SK-N-SH (cell line): ENCODE measurements at regions of chr12 and their contacts with region 1.

Region 1: DNA sequence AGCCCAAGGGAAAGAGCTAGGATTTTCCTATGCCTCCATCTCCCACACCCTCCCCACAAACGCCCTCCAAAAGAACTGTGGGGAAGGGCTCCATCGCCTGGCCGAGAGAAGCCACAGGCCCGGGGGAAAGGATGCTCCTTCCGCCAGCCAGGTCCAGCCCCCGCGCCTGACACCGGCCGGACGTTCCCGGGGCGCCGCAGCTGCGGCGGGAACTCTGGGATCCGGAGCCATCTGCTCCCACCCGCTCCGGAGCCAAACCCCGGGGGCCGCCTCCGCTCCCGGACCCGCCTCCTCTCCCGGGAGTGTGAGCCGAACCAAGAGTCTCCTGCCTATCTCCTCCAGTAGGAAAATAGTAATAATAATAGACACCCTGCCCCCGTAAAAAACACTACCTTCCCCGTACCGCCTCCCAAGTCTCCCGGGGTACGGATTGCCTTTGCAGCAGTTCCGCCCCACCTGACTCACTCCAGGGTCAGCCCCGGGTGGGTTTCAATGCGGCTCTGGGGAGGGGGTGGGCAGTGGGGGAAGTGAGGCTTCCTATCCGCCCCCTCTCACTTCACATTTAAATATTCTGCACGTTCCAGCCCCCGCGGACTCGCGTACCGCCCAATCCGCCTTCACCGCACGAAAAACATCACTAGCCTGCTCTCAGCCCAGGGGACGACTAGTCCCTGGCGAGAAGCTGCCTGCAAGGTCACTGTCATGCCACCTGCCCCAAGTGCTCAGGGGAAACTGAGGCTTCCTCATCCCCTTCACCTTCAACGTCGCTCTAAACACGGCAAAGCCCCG is 2.4 kb downstream of the AGAP2 start:
- DNase-seq: peak; percentile 87
- H3K4me3 ChIP-seq: peak overlapping the region; percentile 29 to 32; a peak in 3 of 4 replicates
- H3K27ac ChIP-seq: peak overlapping the region in 1 of 2 experiments; percentile 39; a peak in 1 of 4 replicates
- H3K4me1 ChIP-seq: peaks cover 0 to 29% of the 10 kb centered on the region in 2 experiments; a peak in 2 of 4 replicates
- H3K27me3 ChIP-seq: no peaks in the 10 kb centered on the region
- CTCF ChIP-seq: peak; percentile 53
- EP300 ChIP-seq: no peak
- RAD21 ChIP-seq: peak; percentile 69

Region 2: DNA sequence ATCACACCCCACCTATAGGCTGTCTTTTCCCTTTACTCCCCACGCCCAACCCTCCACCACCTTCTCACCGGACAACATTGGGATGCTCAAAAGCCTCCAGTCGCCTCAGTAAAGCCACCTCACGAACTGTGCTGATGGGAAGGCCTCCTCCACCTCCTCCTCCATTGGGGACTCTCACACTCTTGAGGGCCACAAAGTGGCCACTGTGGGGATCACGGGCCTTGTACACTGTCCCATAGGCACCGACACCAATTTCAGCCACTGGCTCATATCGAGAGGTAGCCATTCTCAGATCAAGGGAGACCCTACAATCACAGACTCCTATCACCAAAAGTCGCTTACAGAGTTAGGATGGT is 15.3 kb after region 1 on chr12:
- CTCF ChIA-PET with region 1: interaction called, 13 read pairs
- POLR2A ChIA-PET with region 1: interaction called, 3 read pairs
- DNase-seq: no peak
- H3K4me3 ChIP-seq: peak overlapping the region; percentile 85 to 88
- H3K27ac ChIP-seq: peak overlapping the region; percentile 85 to 89
- H3K4me1 ChIP-seq: peaks cover 8 to 36% of the 10 kb centered on the region in 2 experiments
- H3K27me3 ChIP-seq: no peaks in the 10 kb centered on the region
- CTCF ChIP-seq: no peak
- EP300 ChIP-seq: no peak
- RAD21 ChIP-seq: no peak

Region 3: GRCh38 chr12:57772429-57773322 is 36.5 kb after region 1 on chr12 and contains the start of gene EEF1AKMT3:
- CTCF ChIA-PET with region 1: no interaction called
- POLR2A ChIA-PET with region 1: no interaction called
- DNase-seq: peak; percentile 81
- H3K4me3 ChIP-seq: peak within 1 kb of the TSS; percentile 60 to 78
- H3K27ac ChIP-seq: peak within 1 kb of the TSS; percentile 92 to 93
- H3K4me1 ChIP-seq: peaks cover 3 to 12% of the 10 kb centered on the region in 2 experiments; a peak in 1 of 4 replicates
- H3K27me3 ChIP-seq: no peaks in the 10 kb centered on the region
- CTCF ChIP-seq: no peak
- EP300 ChIP-seq: no peak
- RAD21 ChIP-seq: no peak
- polyA plus RNA-seq, gene EEF1AKMT3: 10.3 and 10.8 TPM in 2 replicates